MCF 10A (cell line): ENCODE measurements at regions of chr20 and their contacts with region 1.

Region 1: GRCh38 chr20:62368976-62369814 is 2.1 kb upstream of the LAMA5 start:
- DNase-seq: peak; percentile 76
- H3K4me3 Mint-ChIP-seq: peak overlapping the region; percentile 80
- H3K27ac Mint-ChIP-seq: no peak overlapping the region
- H3K4me1 Mint-ChIP-seq: peaks cover 35% of the 10 kb centered on the region
- H3K27me3 Mint-ChIP-seq: no peaks in the 10 kb centered on the region
- CTCF ChIP-seq: peak; percentile 30

Region 2: GRCh38 chr20:62177307-62177706 is 191.9 kb before region 1 on chr20:
- CTCF ChIA-PET with region 1: no interaction called
- POLR2A ChIA-PET with region 1: no interaction called
- intact Hi-C with region 1: no loop called
- DNase-seq: no peak
- H3K4me3 Mint-ChIP-seq: no peak overlapping the region
- H3K27ac Mint-ChIP-seq: no peak overlapping the region
- H3K4me1 Mint-ChIP-seq: no peaks in the 10 kb centered on the region
- H3K27me3 Mint-ChIP-seq: no peaks in the 10 kb centered on the region
- CTCF ChIP-seq: no peak

Region 3: GRCh38 chr20:62357187-62357667 is 12.0 kb before region 1 on chr20:
- CTCF ChIA-PET with region 1: interaction called, 63 read pairs
- POLR2A ChIA-PET with region 1: interaction called, 347 read pairs
- intact Hi-C with region 1: no loop called
- DNase-seq: peak; percentile 73
- H3K4me3 Mint-ChIP-seq: no peak overlapping the region
- H3K27ac Mint-ChIP-seq: no peak overlapping the region
- H3K4me1 Mint-ChIP-seq: peaks cover 34% of the 10 kb centered on the region
- H3K27me3 Mint-ChIP-seq: no peaks in the 10 kb centered on the region
- CTCF ChIP-seq: no peak

Region 4: DNA sequence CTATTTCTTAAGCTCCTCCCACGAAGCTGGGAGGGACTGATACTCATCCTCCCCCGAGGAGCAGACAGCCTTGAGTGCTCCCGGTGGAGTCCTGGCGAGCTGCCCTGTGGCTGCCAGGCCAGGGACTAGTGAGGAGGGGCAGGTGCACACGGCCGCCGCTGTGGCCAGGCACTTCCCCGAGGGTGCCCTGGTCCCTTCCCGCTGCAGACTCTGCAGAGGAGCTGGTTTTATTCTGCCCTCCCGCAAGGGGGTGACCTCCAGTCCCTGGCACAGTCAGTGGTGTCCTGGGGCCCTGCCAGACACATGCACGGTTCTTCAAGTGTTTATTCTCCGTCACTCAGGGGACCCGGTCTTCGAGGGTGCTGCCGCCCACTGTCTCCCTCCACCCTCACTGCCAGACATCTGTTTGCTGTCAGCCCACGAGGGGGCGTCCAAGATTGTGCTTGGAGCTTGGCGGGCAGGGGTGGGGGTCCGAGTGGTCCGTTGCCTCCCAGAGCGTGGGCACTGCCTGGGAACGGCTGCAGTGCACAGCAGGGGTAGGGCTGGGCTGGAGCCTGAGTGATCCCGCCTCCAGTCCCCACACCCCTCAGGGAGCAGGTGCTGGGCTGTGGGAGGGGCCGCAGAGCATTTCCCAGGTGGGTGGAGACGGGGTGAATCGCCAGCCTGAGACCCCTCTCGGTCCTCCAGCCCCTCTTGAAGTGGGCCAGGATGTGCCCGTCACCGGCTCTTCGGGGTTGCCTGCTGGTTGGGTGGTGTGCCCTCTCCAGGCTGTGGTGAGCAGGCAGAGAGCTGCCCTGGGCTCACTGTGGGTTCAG is 40.9 kb after region 1 on chr20:
- CTCF ChIA-PET with region 1: no interaction called
- POLR2A ChIA-PET with region 1: no interaction called
- intact Hi-C with region 1: loop called (anchors 1 kb)
- DNase-seq: peak; percentile 36
- H3K4me3 Mint-ChIP-seq: no peak overlapping the region
- H3K27ac Mint-ChIP-seq: no peak overlapping the region
- H3K4me1 Mint-ChIP-seq: peaks cover 17% of the 10 kb centered on the region
- H3K27me3 Mint-ChIP-seq: no peaks in the 10 kb centered on the region
- CTCF ChIP-seq: no peak